Sigmoid colon (tissue), 7 donors: ENCODE measurements at regions of chr3 and their contacts with region 1.

Region 1: DNA sequence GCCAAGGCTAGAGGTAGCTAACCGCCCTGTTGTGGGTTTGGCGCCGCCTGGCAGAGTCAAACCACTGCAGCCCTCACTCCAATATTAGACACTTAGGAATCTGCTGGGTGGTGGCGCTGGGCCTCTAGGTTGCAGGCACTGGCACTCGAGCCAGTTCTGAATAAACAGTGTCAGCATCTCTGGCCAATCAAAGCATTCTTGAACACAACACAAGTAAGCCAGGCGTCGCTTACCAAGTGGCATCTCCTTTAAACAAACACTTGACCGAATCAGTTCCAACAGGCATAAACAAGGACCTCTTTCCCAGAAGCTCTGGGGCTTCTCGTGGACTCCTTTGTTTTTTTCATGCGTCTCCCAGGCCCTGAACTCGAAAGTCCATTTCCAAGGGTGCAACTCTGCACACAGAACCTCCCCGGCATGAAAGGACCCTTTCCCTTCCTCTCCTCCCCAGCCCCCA is 82.3 kb downstream of the LRIG1 start:
- DNase-seq: peak; percentile 90
- H3K4me3 ChIP-seq: no peak overlapping the region
- H3K27ac ChIP-seq: peak overlapping the region; percentile 68 to 95 (median 86)
- H3K4me1 ChIP-seq: peaks cover 0 to 88% (median 85%) of the 10 kb centered on the region in 4 donors
- H3K27me3 ChIP-seq: no peaks in the 10 kb centered on the region
- CTCF ChIP-seq: peak in 1 of 4 experiments; percentile 16
- EP300 ChIP-seq: peak; percentile 30 to 85 (median 69)
- POLR2A ChIP-seq: no peak

Region 2: DNA sequence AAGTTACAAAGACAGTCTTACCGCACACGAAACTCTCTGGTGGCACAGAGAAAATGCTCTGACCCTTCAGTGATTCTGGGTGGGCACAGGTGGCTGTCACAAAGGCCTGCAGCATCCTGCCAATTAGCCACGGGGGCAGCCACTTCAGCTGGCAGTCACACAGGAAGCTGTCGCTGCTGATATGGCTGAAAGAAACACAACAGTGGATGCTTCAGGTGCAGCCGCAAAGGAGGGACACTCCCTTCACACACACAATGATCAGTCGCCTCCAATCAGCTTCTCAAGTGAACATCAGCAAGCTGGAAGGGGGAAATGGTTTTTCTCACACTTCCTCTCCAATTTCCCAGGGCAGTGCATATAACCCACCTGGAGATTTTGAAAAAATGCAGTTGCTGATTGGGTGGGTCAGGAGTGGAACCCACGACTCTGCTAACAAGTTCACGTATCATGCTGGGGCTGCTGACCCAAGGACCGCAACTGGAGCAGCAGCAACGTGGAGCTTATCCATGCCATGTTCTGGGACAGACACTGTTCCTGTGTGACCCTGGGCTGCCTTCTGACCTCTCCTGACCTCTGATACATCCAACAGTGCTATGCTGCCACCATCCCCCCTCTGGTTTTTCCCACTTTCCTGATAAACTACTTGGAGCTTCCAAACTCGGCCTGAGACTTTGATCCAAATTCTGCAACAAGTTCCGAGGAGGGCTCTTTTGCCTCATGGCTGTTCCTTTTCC is 24.3 kb before region 1 on chr3:
- intact Hi-C with region 1: no loop called
- DNase-seq: peak; percentile 54
- H3K4me3 ChIP-seq: no peak overlapping the region
- H3K27ac ChIP-seq: peak overlapping the region in 3 of 4 donors; percentile 82 to 95 (median 89)
- H3K4me1 ChIP-seq: peaks cover 0 to 71% (median 68%) of the 10 kb centered on the region in 4 donors
- H3K27me3 ChIP-seq: no peaks in the 10 kb centered on the region
- CTCF ChIP-seq: no peak
- EP300 ChIP-seq: no peak
- POLR2A ChIP-seq: no peak

Region 3: GRCh38 chr3:66693461-66694031 is 275.0 kb after region 1 on chr3:
- intact Hi-C with region 1: loop called (anchors 5 kb)
- DNase-seq: peak; percentile 74
- H3K4me3 ChIP-seq: no peak overlapping the region
- H3K27ac ChIP-seq: peak overlapping the region; percentile 56 to 83 (median 78)
- H3K4me1 ChIP-seq: peaks cover 0 to 48% (median 40%) of the 10 kb centered on the region in 4 donors
- H3K27me3 ChIP-seq: no peaks in the 10 kb centered on the region
- CTCF ChIP-seq: no peak
- EP300 ChIP-seq: no peak
- POLR2A ChIP-seq: no peak

Region 4: GRCh38 chr3:66709532-66709931 is 291.0 kb after region 1 on chr3:
- intact Hi-C with region 1: loop called (anchors 5 kb)
- DNase-seq: peak; percentile 90
- H3K4me3 ChIP-seq: no peak overlapping the region
- H3K27ac ChIP-seq: peak overlapping the region in 3 of 4 donors; percentile 66 to 76 (median 69)
- H3K4me1 ChIP-seq: peaks cover 0 to 40% (median 32%) of the 10 kb centered on the region in 4 donors
- H3K27me3 ChIP-seq: no peaks in the 10 kb centered on the region
- CTCF ChIP-seq: no peak
- EP300 ChIP-seq: peak; percentile 21 to 92 (median 68)
- POLR2A ChIP-seq: no peak